Gastrocnemius medialis (tissue), 4 donors: ENCODE measurements at regions of chr9 and their contacts with region 1.

Region 1: DNA sequence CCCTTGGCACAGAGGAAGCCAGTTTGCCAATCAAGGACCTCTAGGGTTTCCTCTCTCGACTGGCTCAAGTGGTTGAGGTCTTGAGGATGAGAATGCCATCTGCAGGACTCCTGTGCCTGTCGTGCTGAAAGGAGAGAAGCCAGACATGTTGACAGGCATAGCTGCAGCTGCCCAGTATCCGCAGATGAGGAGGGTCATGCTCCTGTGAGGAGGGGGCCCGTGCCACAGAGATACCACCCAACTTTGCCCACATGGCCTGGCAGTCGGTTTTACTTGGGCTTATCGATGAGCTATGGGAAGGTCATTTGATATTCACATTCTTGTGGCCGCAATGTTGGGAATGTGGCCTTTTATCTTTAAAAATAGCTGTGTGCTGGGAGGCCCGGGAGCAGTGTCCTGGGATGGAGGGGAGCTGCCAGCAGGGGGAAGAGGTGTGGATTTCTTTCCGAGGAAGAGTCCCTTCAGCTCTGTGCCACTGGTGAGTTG is 17.4 kb downstream of the FRMPD1 start:
- DNase-seq: peak; percentile 80 to 81
- ATAC-seq: peak; percentile 94 to 97
- H3K4me3 ChIP-seq: peak overlapping the region; percentile 21 to 50 (median 32)
- H3K27ac ChIP-seq: peak overlapping the region; percentile 78 to 84 (median 80)
- H3K4me1 ChIP-seq: peaks cover 15 to 21% of the 10 kb centered on the region in 2 donors
- H3K27me3 ChIP-seq: no peaks in the 10 kb centered on the region
- CTCF ChIP-seq: peak in 4 of 5 experiments; percentile 11 to 47 (median 23)
- POLR2A ChIP-seq: no peak

Region 2: GRCh38 chr9:37575921-37576721 is 92.0 kb before region 1 on chr9 and contains the start of gene FBXO10:
- in situ Hi-C with region 1: loop called in 1 of 4 experiments (anchors 10 kb)
- intact Hi-C with region 1: loop called (anchors 2 kb)
- DNase-seq: peak; percentile 53 to 72
- ATAC-seq: peak; percentile 62 to 71
- H3K4me3 ChIP-seq: peak within 1 kb of the TSS; percentile 84 to 96 (median 93)
- H3K27ac ChIP-seq: peak within 1 kb of the TSS; percentile 94 to 99 (median 98)
- H3K4me1 ChIP-seq: peaks cover 35 to 42% of the 10 kb centered on the region in 2 donors
- H3K27me3 ChIP-seq: no peaks in the 10 kb centered on the region
- CTCF ChIP-seq: peak in 1 of 5 experiments; percentile 24
- POLR2A ChIP-seq: peak; percentile 95 to 96
- total RNA-seq, gene FBXO10: 49.8 to 62.2 (median 53.5) TPM

Region 3: GRCh38 chr9:37602817-37603216 is 65.3 kb before region 1 on chr9:
- in situ Hi-C with region 1: loop called in 1 of 4 experiments (anchors 10 kb)
- intact Hi-C with region 1: loop called (anchors 2 kb)
- DNase-seq: peak; percentile 89 to 92
- ATAC-seq: peak; percentile 97 to 98
- H3K4me3 ChIP-seq: peak overlapping the region in 1 of 4 donors; percentile 8
- H3K27ac ChIP-seq: peak overlapping the region; percentile 28 to 83 (median 66)
- H3K4me1 ChIP-seq: peaks cover 11 to 13% of the 10 kb centered on the region in 2 donors
- H3K27me3 ChIP-seq: no peaks in the 10 kb centered on the region
- CTCF ChIP-seq: no peak
- POLR2A ChIP-seq: no peak

Region 4: DNA sequence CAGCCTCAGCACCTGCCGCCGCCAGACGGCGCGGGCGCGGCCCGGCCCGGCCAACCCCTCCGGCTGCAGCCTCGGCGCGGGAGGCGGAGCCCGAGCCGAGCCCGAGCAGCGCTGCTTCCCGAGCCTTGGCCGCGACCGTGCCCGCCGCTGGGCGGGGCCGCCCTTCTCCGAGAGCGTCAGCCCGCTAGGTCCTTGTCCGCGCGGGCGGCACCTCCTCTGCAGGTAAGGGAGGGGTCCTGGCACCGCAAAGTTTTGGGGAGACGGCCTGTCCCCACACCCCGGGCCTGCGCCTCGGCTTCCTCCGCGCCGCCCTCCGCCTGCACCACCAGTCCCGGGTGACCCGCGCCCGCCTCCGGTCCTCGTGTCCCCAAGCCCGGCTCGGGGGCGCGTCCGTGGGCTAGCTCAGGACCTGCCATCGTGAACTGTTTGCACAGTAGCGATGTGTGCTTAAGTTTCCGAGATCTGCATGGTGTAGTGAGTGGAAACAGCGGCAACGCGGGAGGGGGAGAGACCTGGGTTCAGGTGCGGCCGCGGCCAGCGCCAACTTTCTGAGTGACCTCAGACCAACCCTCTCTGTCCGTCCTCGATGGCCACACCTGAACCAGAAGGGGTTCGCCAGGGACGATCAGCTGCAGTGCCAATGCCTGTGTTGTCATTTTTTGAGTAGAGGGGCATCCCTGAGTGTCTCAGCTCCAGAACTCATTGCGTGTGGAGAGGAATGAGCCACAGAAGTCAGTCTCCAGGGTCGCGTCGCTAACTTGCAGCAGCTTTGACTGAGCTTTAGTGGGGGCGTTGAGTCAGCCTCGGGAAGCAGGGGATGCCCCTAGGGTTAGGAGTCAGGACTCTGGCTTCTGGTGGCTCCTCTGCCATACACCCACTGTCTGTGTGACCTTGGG is 17.0 kb before region 1 on chr9 and contains the start of gene FRMPD1:
- in situ Hi-C with region 1: no loop called
- intact Hi-C with region 1: loop called (anchors 1 kb)
- DNase-seq: peak in 1 of 2 donors; percentile 42
- ATAC-seq: peak; percentile 82 to 84
- H3K4me3 ChIP-seq: peak within 1 kb of the TSS; percentile 65 to 93 (median 76)
- H3K27ac ChIP-seq: peak within 1 kb of the TSS; percentile 42 to 69 (median 58)
- H3K4me1 ChIP-seq: peaks cover 10 to 12% of the 10 kb centered on the region in 2 donors
- H3K27me3 ChIP-seq: no peaks in the 10 kb centered on the region
- CTCF ChIP-seq: peak in 1 of 5 experiments; percentile 21
- POLR2A ChIP-seq: no peak
- total RNA-seq, gene FRMPD1: 0.46 to 1.7 (median 1.0) TPM

Region 5: DNA sequence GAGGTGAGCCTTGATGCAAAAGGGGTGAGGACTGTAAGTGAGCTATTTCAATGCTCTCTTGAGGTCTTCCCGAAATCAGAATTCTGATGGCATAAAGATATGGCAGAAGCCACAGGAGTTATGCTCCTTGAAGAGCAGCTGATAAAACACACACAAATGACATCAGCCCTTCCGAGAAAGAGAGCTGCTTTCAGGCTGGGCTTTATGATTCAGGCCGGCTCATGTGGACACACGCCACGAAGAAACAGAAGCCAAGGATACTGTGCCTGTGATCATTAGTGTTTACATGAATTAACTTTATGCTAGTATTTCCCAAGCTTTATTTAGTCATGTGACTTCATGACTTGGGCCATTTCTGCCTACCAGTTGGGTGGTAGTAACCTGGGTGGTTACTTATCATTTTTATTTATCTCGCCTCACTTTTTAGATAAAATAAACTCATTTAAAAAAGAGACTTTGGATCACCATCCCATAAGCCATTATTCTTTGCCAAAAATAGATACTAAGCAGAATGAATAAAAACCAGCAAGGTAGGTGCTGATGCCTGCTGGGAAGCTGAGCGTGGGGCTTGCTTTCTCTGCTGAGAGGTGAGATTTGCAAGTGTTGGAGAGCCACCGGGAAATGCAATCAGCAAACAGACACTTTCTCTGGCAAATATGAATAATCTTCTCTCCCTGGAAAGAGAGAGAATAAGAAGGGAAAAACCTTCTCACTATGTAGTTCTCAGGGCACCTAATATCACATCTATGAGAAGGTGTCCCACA is 308.7 kb after region 1 on chr9:
- in situ Hi-C with region 1: no loop called
- intact Hi-C with region 1: no loop called
- DNase-seq: no peak
- ATAC-seq: no peak
- H3K4me3 ChIP-seq: no peak overlapping the region
- H3K27ac ChIP-seq: no peak overlapping the region
- H3K4me1 ChIP-seq: no peaks in the 10 kb centered on the region
- H3K27me3 ChIP-seq: no peaks in the 10 kb centered on the region
- CTCF ChIP-seq: no peak
- POLR2A ChIP-seq: no peak

Region 6: DNA sequence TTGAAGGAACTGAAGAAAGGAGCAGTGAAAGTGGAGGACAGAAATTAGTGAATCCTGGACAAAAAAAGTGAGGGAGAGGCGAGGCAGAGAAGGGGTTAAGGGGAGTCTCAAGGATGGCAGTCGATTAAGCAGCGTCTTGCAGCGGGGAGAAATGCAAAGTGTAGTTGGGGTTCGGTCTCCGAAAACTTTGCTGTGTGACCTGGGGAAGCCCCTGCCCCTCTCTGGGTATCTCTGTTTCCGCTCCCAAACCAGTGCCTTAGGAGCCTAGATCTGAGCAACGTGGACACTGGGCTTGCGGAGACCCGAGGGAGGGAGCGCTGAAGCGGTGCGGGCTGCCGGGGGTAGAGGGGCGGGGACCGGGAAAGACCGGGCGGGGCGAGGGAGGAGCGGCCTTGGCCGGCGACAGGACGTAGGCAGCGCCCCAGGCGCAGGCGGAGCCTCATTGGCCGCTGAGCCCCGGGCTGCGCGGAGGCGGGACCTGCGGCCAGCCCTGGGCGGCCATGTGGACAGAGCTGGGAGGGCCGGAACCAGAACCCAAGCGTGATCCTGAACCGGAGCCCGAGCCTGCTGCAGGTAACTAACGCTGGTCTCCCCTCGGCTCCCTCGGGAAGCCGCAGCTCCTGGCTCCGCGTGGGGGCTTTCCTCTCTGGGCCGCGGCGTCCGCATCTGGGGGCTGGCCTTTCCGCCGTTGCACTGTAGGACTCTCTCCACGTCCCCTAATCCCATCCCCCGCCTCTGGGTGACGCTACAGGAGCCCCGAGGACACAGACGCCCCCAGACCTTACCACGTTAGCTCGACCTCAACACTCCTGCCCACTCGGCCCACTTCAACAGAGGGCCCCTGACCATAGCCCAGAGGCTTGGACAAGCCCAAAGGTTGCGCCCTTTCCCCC is 724.3 kb after region 1 on chr9 and contains the start of gene ALDH1B1:
- in situ Hi-C with region 1: no loop called
- intact Hi-C with region 1: no loop called
- DNase-seq: peak; percentile 78 to 79
- ATAC-seq: peak; percentile 84 to 88
- H3K4me3 ChIP-seq: peak within 1 kb of the TSS; percentile 65 to 82 (median 76)
- H3K27ac ChIP-seq: peak within 1 kb of the TSS; percentile 69 to 88 (median 82)
- H3K4me1 ChIP-seq: peaks cover 20 to 25% of the 10 kb centered on the region in 2 donors
- H3K27me3 ChIP-seq: no peaks in the 10 kb centered on the region
- CTCF ChIP-seq: peak in 2 of 5 experiments; percentile 10 to 26
- POLR2A ChIP-seq: peak; percentile 40 to 79
- total RNA-seq, gene ALDH1B1: 21.0 to 50.9 (median 36.0) TPM